OCI-LY7 (cell line): ENCODE measurements at regions of chr15 and their contacts with region 1.

Region 1: GRCh38 chr15:91022075-91022835 is at the start of gene VPS33B:
- DNase-seq: peak; percentile 86
- H3K4me3 ChIP-seq: peak within 1 kb of the TSS; percentile 91
- H3K27ac ChIP-seq: no peak within 1 kb of the TSS
- H3K4me1 ChIP-seq: peaks cover 16% of the 10 kb centered on the region
- CTCF ChIP-seq: no peak
- total RNA-seq, gene VPS33B: 3.9 and 4.7 TPM in 2 replicates

Region 2: GRCh38 chr15:90400406-90401314 is 621.6 kb before region 1 on chr15:
- CTCF ChIA-PET with region 1: no interaction called
- POLR2A ChIA-PET with region 1: no interaction called
- intact Hi-C with region 1: loop called (anchors 10 kb)
- DNase-seq: peak; percentile 79
- H3K4me3 ChIP-seq: peak overlapping the region; percentile 29
- H3K27ac ChIP-seq: peak overlapping the region; percentile 18
- H3K4me1 ChIP-seq: peaks cover 27% of the 10 kb centered on the region
- CTCF ChIP-seq: no peak

Region 3: DNA sequence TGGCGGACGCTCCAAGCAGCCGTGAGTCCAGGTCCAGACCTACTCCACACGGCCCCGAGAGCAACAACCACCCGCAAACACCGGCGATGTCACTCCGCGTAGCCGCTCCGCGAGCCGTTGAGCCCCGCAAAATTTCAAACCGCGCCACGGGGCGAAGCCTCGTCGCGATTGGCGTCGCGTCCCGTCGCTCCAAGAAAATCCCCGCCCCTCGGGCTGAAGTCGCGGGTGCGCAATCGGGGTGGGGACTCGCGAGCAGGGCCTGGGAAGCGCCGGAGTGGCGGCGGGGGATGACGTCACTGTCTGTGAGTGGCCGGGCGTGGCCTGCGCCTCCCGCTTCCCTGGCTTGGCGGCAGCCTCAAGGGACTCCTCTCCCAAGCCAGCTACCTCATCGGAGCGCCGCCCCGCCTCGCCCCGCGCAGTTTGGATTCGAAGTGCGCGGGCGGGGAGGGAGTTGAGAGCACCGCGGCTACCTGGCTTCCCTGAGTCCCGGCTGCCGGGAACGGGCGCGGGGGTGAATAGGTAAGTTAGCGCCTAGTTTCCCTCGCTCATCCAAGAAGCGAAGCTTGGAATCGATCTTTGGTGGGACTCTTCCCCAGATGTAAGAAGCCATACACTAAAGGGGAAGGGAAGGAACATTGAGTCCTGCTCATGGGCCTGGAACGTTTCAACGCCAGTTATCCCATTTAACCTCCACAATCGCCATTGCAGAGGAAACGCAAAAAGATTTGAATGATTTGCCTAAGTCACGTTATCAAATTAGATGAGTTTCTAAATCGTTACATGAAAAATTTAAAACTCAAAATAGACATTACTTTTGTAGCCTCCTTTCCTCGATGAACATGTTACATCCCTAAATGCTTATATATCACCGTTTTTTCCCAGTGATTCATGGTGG is 27.6 kb before region 1 on chr15 and contains the start of gene PRC1:
- CTCF ChIA-PET with region 1: no interaction called
- POLR2A ChIA-PET with region 1: interaction called, 3 read pairs
- intact Hi-C with region 1: loop called (anchors 1 kb)
- DNase-seq: peak; percentile 98
- H3K4me3 ChIP-seq: peak within 1 kb of the TSS; percentile 84
- H3K27ac ChIP-seq: peak within 1 kb of the TSS; percentile 68
- H3K4me1 ChIP-seq: peaks cover 30% of the 10 kb centered on the region
- CTCF ChIP-seq: no peak
- total RNA-seq, gene PRC1: 224 and 402 TPM in 2 replicates

Region 4: GRCh38 chr15:91007266-91007665 is 15.0 kb before region 1 on chr15:
- CTCF ChIA-PET with region 1: no interaction called
- POLR2A ChIA-PET with region 1: interaction called, 15 read pairs
- intact Hi-C with region 1: no loop called
- DNase-seq: no peak
- H3K4me3 ChIP-seq: no peak overlapping the region
- H3K27ac ChIP-seq: no peak overlapping the region
- H3K4me1 ChIP-seq: no peaks in the 10 kb centered on the region
- CTCF ChIP-seq: no peak